IMR-90 (cell line): ENCODE measurements at regions of chr13 and their contacts with region 1.

Region 1: DNA sequence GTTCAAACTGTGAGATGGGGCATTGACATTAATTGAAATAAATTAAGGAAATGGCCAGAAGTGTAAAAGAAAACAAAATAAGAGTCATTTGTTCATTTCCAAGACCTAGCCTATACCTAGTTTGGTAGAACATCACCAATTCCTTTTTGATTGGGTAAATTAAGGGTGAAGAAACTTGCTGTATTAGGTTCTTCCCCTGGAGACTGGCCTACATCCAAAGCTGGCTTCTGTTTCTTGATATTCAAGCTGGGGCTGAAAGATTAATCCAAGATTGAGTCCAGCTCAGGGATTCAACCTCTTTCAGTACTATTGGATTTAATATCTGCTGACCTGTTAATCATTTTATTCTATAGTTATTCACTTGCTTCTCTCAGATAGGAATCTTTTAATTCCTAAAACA is 183.2 kb downstream of the GPC6 start:
- DNase-seq: no peak
- ATAC-seq: no peak
- H3K4me3 ChIP-seq: no peak overlapping the region
- H3K27ac ChIP-seq: no peak overlapping the region
- H3K4me1 ChIP-seq: no peaks in the 10 kb centered on the region; the same call in 1 of the 2 replicates
- H3K27me3 ChIP-seq: no peaks in the 10 kb centered on the region
- CTCF ChIP-seq: no peak
- POLR2A ChIP-seq: no peak
- RAD21 ChIP-seq: no peak

Region 2: GRCh38 chr13:93217721-93218261 is 192.0 kb before region 1 on chr13:
- CTCF ChIA-PET with region 1: no interaction called
- POLR2A ChIA-PET with region 1: no interaction called
- dilution Hi-C with region 1: no loop called
- in situ Hi-C with region 1: no loop called
- intact Hi-C with region 1: no loop called
- DNase-seq: no peak
- ATAC-seq: peak; percentile 46; the same call in 1 of the 2 replicates
- H3K4me3 ChIP-seq: no peak overlapping the region
- H3K27ac ChIP-seq: peak overlapping the region; percentile 44; the same call in 1 of the 2 replicates
- H3K4me1 ChIP-seq: no peaks in the 10 kb centered on the region; the same call in 1 of the 2 replicates
- H3K27me3 ChIP-seq: no peaks in the 10 kb centered on the region
- CTCF ChIP-seq: no peak
- POLR2A ChIP-seq: no peak
- RAD21 ChIP-seq: no peak

Region 3: GRCh38 chr13:93522501-93522900 is 112.7 kb after region 1 on chr13:
- CTCF ChIA-PET with region 1: no interaction called
- POLR2A ChIA-PET with region 1: no interaction called
- dilution Hi-C with region 1: no loop called
- in situ Hi-C with region 1: no loop called
- intact Hi-C with region 1: loop called (anchors 10 kb)
- DNase-seq: peak; percentile 74
- ATAC-seq: peak; percentile 69
- H3K4me3 ChIP-seq: no peak overlapping the region
- H3K27ac ChIP-seq: no peak overlapping the region
- H3K4me1 ChIP-seq: no peaks in the 10 kb centered on the region; the same call in 1 of the 2 replicates
- H3K27me3 ChIP-seq: no peaks in the 10 kb centered on the region
- CTCF ChIP-seq: no peak
- POLR2A ChIP-seq: no peak
- RAD21 ChIP-seq: no peak